Caco-2 (cell line): ENCODE measurements at regions of chr1 and their contacts with region 1.

Region 1: DNA sequence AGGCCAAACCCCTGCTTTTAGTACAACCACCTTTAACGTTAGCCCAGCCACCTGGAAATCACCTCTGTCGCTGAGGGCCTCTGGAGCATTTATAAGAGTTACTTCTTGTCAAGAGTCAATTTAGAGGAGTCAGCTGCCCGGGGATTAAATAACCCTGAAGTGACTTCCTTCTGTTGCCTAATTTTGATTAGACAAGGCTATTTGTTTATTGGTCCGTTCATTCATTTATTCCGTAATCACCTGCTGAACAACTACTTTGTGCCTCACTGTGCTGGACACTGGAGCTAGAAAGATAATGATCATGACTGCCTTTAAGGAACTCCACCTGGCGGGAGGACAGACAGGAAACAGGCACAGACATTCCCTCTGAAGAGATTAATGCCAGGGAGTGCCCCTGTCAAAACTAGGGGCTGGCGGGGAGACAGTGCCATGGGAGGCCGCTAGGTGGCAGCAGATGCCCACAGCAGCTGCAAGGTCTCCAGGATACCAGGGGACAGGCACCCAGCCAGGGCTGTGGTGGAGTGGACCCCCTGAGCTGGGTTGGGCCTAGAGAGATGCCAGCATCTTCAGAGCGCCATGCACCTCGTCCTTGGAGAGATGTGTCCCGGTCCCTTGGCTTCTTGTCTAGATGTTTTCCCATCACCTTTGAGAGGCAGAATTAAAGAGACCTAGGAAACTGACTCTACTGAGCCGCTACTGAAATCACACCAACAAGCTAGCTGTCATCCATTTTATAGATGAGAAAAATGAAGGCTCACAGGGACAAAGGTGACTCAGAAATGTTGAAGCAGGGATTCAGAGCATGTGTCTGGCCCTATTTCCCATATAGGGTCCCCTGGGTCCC is 3.7 kb downstream of the REN start:
- DNase-seq: peak; percentile 82 to 90
- H3K4me3 ChIP-seq: no peak overlapping the region
- H3K4me3 Mint-ChIP-seq: no peak overlapping the region
- H3K27ac Mint-ChIP-seq: no peak overlapping the region
- H3K4me1 ChIP-seq: no peaks in the 10 kb centered on the region
- H3K4me1 Mint-ChIP-seq: no peaks in the 10 kb centered on the region
- H3K27me3 ChIP-seq: no peaks in the 10 kb centered on the region
- H3K27me3 Mint-ChIP-seq: no peaks in the 10 kb centered on the region
- CTCF ChIP-seq: peak; percentile 97

Region 2: DNA sequence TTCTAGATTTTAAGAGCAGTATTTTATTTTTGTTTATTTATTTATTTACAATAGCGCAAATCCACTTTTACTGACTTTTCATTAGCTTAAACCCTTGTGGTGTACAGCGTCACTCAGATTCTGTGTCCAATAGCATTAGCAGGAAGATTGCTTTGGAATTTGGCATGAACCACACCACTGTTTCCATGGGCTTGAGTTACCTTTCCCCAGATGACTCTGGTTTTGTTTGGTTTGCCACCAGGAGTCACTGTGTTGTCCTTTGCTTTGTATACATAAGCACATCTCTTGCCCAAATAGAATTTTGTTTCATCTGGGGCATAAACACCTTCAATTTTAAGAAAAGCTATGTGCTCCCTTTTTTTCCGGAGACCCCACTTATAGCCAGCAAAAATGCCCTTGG is 327.0 kb before region 1 on chr1:
- CTCF ChIA-PET with region 1: no interaction called
- POLR2A ChIA-PET with region 1: no interaction called
- intact Hi-C with region 1: no loop called
- DNase-seq: no peak
- H3K4me3 ChIP-seq: no peak overlapping the region
- H3K4me3 Mint-ChIP-seq: no peak overlapping the region
- H3K27ac Mint-ChIP-seq: no peak overlapping the region
- H3K4me1 ChIP-seq: no peaks in the 10 kb centered on the region
- H3K4me1 Mint-ChIP-seq: no peaks in the 10 kb centered on the region
- H3K27me3 ChIP-seq: no peaks in the 10 kb centered on the region
- H3K27me3 Mint-ChIP-seq: no peaks in the 10 kb centered on the region
- CTCF ChIP-seq: no peak

Region 3: DNA sequence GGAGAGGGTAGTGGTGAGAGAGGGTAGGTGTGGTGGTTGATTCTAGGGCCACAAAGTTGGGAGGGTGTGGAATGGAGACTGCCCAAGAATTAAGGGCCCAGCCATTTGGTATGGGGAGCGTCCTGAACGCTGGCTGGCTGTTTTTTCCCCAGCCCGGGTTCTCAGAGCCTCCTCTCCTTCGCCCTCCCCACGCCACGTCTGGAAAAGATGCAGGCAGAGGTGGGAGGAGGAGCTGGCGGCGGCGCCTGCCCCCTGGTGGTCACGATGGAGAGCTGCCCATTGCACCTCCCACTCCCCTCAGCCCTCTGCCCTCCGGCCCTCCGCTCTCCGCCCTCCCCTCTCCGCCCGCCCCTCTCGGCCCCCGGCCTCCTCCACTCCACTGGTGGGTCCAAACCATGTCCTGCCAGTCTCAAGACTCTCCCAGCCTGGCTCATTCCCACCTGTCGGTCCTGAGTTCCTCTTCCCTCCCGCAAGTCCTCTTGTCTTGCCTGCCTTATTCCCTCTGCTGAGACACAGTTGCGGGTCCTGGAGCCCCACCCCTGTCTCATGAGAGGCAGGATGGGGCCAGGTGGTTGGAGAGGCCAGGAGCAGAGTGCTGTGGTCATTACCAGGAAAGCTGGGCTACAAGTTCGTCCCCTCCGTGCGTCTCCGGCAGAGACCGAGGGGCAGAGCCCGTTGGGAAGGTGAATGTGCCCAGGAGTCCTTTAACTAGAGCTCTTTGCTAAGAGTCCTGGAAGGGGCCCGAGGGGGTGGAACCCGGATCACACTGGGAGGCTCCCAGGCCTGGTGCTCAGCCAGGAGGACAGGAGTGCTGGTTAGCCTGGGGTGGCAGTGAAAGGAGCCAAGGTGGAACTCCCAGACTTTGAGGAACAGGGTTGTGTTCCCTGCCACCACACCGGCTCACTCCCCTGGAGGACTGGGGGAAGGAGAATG is 33.2 kb before region 1 on chr1:
- CTCF ChIA-PET with region 1: interaction called, 3 read pairs
- POLR2A ChIA-PET with region 1: no interaction called
- intact Hi-C with region 1: loop called (anchors 1 kb)
- DNase-seq: peak; percentile 76 to 77
- H3K4me3 ChIP-seq: peak overlapping the region; percentile 11; the same call in 1 of the 2 replicates
- H3K4me3 Mint-ChIP-seq: peak overlapping the region; percentile 70
- H3K27ac Mint-ChIP-seq: peak overlapping the region; percentile 71
- H3K4me1 ChIP-seq: peaks cover 5% of the 10 kb centered on the region; the same call in 1 of the 2 replicates
- H3K4me1 Mint-ChIP-seq: peaks cover 19% of the 10 kb centered on the region
- H3K27me3 ChIP-seq: no peaks in the 10 kb centered on the region
- H3K27me3 Mint-ChIP-seq: no peaks in the 10 kb centered on the region
- CTCF ChIP-seq: peak; percentile 92 to 96

Region 4: GRCh38 chr1:204186597-204186996 is 24.1 kb after region 1 on chr1:
- CTCF ChIA-PET with region 1: no interaction called
- POLR2A ChIA-PET with region 1: no interaction called
- intact Hi-C with region 1: no loop called
- DNase-seq: no peak
- H3K4me3 ChIP-seq: no peak overlapping the region
- H3K4me3 Mint-ChIP-seq: no peak overlapping the region
- H3K27ac Mint-ChIP-seq: no peak overlapping the region
- H3K4me1 ChIP-seq: peaks cover 15% of the 10 kb centered on the region
- H3K4me1 Mint-ChIP-seq: no peaks in the 10 kb centered on the region
- H3K27me3 ChIP-seq: no peaks in the 10 kb centered on the region
- H3K27me3 Mint-ChIP-seq: no peaks in the 10 kb centered on the region
- CTCF ChIP-seq: no peak

Region 5: DNA sequence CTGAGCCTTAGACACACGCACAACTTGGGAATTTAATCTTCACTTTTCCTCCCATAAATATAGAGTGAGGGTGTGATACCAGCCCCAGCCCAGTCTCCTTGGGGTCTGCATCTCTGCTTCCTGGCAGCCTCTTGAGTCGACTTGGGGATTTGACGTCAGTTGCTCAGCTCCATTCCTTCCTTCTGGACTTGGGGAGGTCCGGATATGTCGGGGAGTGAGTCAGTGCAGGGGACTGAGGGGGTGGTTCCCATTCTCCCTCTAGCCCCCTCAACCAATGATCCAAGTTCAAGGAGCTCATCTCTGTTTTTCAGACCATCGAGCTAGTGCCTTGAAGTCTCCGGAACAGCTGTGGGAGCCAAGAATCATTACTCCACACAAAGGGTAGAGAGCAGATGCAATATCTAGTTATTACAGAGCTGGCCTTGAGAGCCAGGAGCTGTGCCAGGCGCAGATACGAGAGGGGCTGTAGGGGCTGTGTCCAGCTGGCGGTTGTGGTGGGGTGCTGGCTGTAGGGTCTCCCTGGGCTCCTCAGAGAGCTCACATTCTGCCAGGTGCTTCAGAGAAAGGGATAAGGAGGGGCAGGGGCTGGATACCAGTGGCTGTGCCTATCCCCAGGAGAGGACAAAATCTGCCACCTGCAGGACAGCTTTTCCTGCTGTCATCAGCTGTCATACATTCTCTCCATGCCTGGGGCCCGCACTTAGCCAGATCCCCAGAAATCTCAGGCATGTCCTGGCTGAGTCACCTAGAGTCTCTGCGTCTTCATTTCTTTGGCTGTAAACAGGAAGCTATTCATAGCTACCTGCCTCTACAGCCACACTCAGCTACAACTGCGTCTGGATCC is 35.9 kb after region 1 on chr1:
- CTCF ChIA-PET with region 1: interaction called, 39 read pairs
- POLR2A ChIA-PET with region 1: no interaction called
- intact Hi-C with region 1: loop called (anchors 1 kb)
- DNase-seq: peak; percentile 74 to 80
- H3K4me3 ChIP-seq: no peak overlapping the region
- H3K4me3 Mint-ChIP-seq: no peak overlapping the region
- H3K27ac Mint-ChIP-seq: peak overlapping the region; percentile 68
- H3K4me1 ChIP-seq: peaks cover 23% of the 10 kb centered on the region
- H3K4me1 Mint-ChIP-seq: peaks cover 17% of the 10 kb centered on the region
- H3K27me3 ChIP-seq: no peaks in the 10 kb centered on the region
- H3K27me3 Mint-ChIP-seq: no peaks in the 10 kb centered on the region
- CTCF ChIP-seq: peak in 1 of 2 experiments; percentile 20

Region 6: GRCh38 chr1:204213668-204214662 is 51.5 kb after region 1 on chr1 and contains the start of gene GOLT1A:
- CTCF ChIA-PET with region 1: interaction called, 19 read pairs
- POLR2A ChIA-PET with region 1: no interaction called
- intact Hi-C with region 1: no loop called
- DNase-seq: peak; percentile 97
- H3K4me3 ChIP-seq: peak within 1 kb of the TSS; percentile 79
- H3K4me3 Mint-ChIP-seq: no peak within 1 kb of the TSS
- H3K27ac Mint-ChIP-seq: no peak within 1 kb of the TSS
- H3K4me1 ChIP-seq: peaks cover 12% of the 10 kb centered on the region; the same call in 1 of the 2 replicates
- H3K4me1 Mint-ChIP-seq: no peaks in the 10 kb centered on the region
- H3K27me3 ChIP-seq: no peaks in the 10 kb centered on the region
- H3K27me3 Mint-ChIP-seq: no peaks in the 10 kb centered on the region
- CTCF ChIP-seq: peak; percentile 65 to 73
- total RNA-seq, gene GOLT1A: 20.4 and 25.9 TPM in 2 replicates

Region 7: GRCh38 chr1:204363335-204364124 is 201.1 kb after region 1 on chr1:
- CTCF ChIA-PET with region 1: interaction called, 9 read pairs
- POLR2A ChIA-PET with region 1: no interaction called
- intact Hi-C with region 1: loop called (anchors 1 kb)
- DNase-seq: peak; percentile 74 to 78
- H3K4me3 ChIP-seq: peak overlapping the region; percentile 26
- H3K4me3 Mint-ChIP-seq: peak overlapping the region; percentile 62
- H3K27ac Mint-ChIP-seq: peak overlapping the region; percentile 15
- H3K4me1 ChIP-seq: peaks cover 56% of the 10 kb centered on the region
- H3K4me1 Mint-ChIP-seq: peaks cover 16% of the 10 kb centered on the region
- H3K27me3 ChIP-seq: no peaks in the 10 kb centered on the region
- H3K27me3 Mint-ChIP-seq: no peaks in the 10 kb centered on the region
- CTCF ChIP-seq: peak; percentile 93 to 97